Cardiac septum (tissue), 1 donor: ENCODE measurements at regions of chr11 and their contacts with region 1.

Region 1: GRCh38 chr11:65859200-65859811 is 927 bp upstream of the MUS81 start:
- DNase-seq: peak; percentile 99

Region 2: DNA sequence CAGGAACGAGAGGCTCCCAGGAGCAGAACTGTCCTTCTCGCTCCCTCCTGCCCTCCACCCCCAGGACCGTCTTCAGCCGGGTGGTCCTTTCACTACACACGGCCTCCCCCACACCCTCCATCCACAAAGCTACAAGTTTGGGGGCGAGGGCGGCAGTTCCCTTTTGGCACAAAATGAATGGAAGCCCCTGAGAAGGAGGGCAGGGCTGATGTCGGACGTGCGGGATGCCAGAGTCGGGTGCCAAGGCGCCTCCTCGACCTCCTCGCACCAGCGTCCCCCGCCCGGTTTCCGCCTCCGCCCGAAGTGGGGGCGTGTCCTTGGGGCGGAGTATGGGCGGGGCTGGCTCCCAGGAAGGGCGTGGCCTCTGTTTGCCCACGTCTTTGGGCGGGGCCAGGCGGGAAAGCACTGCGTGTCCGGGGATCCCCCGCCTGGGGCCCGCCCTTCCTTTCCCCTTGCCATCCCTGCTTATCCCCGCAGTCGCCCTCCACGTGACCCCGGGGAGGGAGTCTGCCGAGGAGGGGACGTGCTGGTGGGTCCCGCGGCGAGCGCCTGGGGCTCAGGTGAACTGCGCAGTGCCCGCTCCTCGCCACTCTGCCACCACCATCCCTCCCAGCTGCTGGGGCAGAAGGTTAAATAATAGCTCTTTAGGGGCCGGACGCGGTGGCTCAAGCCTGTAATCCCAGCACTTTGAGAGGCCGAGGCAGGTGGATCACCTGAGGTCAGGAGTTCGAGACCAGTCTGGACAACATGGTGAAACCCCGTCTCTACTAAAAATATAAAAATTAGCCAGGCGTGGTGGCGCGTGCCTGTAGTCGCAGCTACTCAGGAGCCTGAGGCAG is 14.2 kb after region 1 on chr11:
- intact Hi-C with region 1: loop called (anchors 1 kb)
- DNase-seq: peak; percentile 99

Region 3: DNA sequence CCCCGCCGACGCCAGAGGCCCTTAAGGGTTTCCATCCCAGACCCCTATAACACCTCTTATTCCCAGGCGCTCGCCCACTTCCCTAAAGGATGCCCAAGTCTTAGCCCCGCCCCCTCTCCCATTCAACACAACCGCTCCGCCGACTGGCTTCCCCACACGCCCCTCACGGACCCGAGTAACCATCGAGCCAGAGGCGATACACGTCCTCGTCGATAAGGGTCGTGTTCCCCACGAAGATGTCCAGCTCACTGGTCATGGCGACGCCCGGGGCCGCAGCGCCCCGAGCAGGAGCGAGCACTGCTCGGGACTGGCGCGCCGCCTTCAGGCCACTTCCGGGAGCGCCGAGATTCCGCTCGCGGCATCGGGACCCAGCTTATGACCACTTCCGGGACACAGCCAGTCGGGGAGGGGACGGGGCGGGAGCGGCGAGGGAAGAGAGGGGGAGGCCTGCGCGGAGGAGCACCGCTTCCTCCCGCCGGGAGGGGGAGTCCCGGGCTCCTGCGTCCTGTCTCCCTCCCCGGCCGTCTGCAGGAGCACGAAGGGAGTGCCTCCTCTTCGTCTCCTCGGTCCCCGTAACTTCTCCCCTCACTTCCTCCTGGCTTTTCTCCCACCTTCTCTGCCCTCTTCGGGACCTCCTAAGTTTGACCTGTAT is 29.0 kb after region 1 on chr11 and contains the start of gene FIBP:
- intact Hi-C with region 1: loop called (anchors 1 kb)
- DNase-seq: peak; percentile 99
- total RNA-seq, gene FIBP: 62.6 TPM

Region 4: DNA sequence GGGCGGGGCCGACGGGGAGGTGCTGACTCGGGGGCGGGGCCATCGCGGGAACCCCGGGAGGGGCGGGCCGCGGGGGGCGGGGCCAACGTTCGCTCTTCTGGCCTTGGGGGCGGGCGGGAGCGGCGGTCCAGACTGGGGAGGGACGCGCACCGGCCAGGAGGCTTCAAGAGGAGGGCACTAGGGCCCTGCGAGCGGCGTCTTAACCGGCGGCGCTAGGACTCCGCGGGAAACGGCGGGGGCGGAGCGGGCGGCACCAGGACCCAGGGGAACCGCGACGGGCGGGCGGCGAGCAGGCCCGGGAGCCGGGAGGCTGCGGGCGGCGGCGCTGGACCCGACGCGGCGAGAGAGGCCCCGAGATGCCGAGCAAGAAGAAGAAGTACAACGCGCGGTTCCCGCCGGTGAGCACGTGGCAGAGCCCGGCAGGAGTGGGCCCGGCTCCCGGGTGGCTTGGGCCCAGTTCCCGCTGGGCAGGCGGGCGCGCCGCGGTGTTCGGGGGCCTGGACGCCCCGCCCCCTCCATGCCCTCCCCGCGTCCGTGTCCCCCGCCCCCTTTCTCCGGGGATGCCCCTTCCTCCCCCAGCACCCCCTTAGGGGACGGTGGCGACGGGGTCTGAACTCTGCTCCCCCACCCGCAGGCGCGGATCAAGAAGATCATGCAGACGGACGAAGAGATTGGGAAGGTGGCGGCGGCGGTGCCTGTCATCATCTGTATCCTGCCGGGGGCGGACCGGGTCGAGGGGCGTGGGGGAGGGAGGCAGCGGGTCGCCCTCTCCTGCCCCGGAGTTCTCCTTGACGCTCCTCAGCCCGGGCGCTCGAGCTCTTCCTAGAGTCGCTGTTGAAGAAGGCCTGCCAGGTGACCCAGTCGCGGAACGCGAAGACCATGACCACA is 60.1 kb after region 1 on chr11 and contains the start of gene DRAP1:
- intact Hi-C with region 1: loop called (anchors 1 kb)
- DNase-seq: peak; percentile 100
- total RNA-seq, gene DRAP1: 113 TPM

Region 5: DNA sequence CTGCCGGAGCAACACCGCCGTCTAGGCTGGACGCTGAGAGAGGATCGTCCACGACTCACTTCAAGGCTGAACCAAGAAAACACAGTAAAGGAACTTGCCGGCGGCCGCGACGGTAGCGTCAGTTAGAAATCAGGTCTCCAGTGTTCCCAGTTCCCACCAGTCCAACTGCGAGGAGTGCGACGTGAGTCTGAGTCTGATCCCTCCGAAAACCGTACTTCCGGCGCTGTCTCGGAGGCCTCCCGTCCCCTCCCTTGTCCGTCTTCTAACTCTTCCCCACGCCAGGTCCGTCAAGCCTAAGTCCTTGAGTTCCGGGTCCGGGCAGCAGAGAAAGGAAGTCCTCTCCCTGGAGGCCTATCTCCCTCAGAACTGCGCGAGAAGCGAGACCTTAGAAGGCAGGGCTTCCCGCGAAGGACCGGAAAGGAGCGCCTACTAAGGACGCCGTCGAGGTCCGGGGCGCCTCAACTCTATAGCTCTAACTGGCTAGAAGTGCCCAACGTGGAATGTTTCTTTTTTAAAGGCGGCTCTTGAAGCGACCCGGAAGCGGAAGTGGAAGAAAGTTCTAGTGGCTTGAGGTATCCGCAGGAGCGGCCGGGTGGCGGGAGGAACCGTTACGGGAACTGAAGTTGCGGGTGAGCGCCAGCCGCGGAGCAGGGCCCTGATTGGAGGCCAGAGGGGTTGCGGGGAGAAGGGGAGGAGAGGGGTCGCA is 142.8 kb after region 1 on chr11 and contains the starts of genes BANF1 and EIF1AD:
- intact Hi-C with region 1: loop called (anchors 5 kb)
- DNase-seq: peak; percentile 96
- total RNA-seq, gene BANF1: 195 TPM
- total RNA-seq, gene EIF1AD: 18.1 TPM